GM12878 (cell line): ENCODE measurements at regions of chr6 and their contacts with region 1.

Region 1: DNA sequence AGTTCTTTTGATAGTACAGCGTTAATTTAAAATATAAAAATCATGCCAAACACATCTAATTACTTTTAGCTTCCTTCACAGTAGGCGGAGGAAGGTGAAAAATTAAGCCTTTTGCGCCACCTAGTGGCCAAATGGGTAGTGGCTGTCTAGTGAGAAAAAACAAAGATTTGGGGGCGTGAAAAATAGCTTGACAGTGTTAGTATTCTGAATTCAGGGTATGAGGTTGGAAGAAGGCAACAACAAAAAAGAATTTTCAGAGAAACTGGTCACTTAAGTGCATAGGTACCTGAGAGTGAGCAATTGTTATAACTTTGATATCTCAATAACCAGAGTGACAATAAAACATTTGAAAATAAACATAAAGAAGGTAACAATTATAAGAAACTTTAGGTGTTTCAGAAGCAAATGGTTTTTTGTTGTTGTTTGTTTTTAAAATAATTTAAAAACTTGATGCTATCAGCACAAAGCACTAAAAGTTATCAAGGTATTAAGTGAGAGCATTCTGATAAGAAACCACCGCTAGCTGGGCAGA is 14.3 kb downstream of the PSMB9 start:
- DNase-seq: no peak
- ATAC-seq: peak; percentile 88
- H3K4me3 ChIP-seq: no peak overlapping the region
- H3K27ac ChIP-seq: no peak overlapping the region
- H3K4me1 ChIP-seq: peaks cover 23% of the 10 kb centered on the region
- H3K27me3 ChIP-seq: no peaks in the 10 kb centered on the region
- CTCF ChIP-seq: peak; percentile 67 to 85 (median 85)
- EP300 ChIP-seq: no peak
- POLR2A ChIP-seq: no peak
- RAD21 ChIP-seq: peak; percentile 84

Region 2: DNA sequence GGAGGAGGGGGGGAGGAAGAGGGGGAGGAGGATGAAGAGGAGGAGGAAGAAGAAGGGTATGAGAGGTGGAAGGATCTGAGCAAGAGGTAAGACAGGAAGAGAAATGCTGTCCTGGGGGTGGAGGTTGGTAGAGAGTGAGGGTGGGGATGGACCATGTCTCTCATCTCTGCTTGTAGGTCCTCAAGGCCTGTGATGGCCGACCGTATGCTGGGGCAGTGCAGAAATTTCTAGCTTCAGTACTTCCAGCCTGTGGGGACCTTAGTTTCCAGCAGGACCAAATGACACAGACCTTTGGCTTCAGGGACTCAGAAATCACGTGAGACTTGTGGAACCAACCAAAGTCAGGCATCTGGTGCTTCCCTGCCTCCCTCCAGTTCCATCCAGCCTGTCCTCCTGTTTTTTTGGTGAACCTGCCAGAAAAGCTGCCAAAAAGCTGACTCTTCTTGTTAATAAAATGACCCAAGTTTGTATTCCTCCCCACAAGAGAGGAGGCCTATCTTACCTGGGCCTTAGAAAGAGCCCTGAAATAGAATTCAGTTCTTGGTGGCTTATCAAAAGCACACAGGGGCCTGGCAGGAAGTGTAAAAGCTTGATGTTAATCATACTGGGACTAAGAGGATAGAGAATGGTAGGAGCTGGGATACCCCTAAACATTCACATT is 889.0 kb before region 1 on chr6:
- CTCF ChIA-PET with region 1: no interaction called
- POLR2A ChIA-PET with region 1: no interaction called
- RAD21 ChIA-PET with region 1: no interaction called
- SMC1A ChIA-PET with region 1: no interaction called
- in situ Hi-C with region 1: no loop called
- intact Hi-C with region 1: no loop called
- DNase-seq: no peak
- ATAC-seq: no peak
- H3K4me3 ChIP-seq: no peak overlapping the region
- H3K27ac ChIP-seq: no peak overlapping the region
- H3K4me1 ChIP-seq: no peaks in the 10 kb centered on the region
- H3K27me3 ChIP-seq: no peaks in the 10 kb centered on the region
- CTCF ChIP-seq: no peak
- EP300 ChIP-seq: no peak
- POLR2A ChIP-seq: no peak
- RAD21 ChIP-seq: no peak

Region 3: GRCh38 chr6:32413427-32414047 is 454.8 kb before region 1 on chr6:
- CTCF ChIA-PET with region 1: interaction called, 32 read pairs
- POLR2A ChIA-PET with region 1: interaction called, 3 read pairs
- RAD21 ChIA-PET with region 1: interaction called, 7 read pairs
- SMC1A ChIA-PET with region 1: interaction called, 34 read pairs
- in situ Hi-C with region 1: loop called (anchors 5 kb)
- intact Hi-C with region 1: loop called (anchors 5 kb)
- DNase-seq: peak; percentile 40
- ATAC-seq: peak; percentile 94
- H3K4me3 ChIP-seq: no peak overlapping the region
- H3K27ac ChIP-seq: no peak overlapping the region
- H3K4me1 ChIP-seq: no peaks in the 10 kb centered on the region
- H3K27me3 ChIP-seq: no peaks in the 10 kb centered on the region; a peak in 2 of 4 replicates
- CTCF ChIP-seq: peak; percentile 84 to 96 (median 94)
- EP300 ChIP-seq: no peak
- POLR2A ChIP-seq: no peak
- RAD21 ChIP-seq: peak; percentile 83

Region 4: DNA sequence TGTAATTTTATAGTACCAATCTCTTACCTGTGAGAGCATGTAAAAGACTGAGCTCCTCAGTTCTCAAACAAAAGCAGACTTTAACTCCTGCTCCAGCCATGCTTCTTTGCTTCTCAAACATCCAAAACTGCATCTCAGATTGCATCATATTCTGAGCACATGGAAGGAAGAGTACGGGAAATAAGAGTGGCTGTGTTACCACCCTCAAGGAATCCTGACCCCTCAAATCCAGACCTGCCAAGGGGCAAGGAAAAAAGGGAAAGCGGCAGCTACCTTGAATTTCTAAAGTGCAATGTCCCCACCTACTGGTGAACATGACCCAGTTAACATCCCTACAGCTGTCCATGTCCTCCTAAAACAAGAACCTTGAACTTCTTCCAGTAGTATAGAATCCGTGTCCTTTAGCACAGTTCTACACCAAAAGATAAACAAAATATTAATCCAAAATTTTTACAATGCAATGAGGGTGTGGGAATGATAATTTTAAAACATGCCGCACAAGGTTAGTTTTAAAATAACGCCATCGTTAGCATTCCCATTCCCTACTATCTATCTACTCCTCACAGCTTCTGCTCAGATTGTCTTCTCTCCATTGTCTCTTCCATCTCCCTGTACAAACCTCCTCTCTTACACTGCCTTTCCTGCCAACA is 167.8 kb before region 1 on chr6:
- CTCF ChIA-PET with region 1: interaction called, 58 read pairs
- POLR2A ChIA-PET with region 1: no interaction called
- RAD21 ChIA-PET with region 1: interaction called, 29 read pairs
- SMC1A ChIA-PET with region 1: interaction called, 30 read pairs
- in situ Hi-C with region 1: no loop called
- intact Hi-C with region 1: loop called (anchors 5 kb)
- DNase-seq: no peak
- ATAC-seq: peak; percentile 93
- H3K4me3 ChIP-seq: no peak overlapping the region
- H3K27ac ChIP-seq: no peak overlapping the region
- H3K4me1 ChIP-seq: no peaks in the 10 kb centered on the region
- H3K27me3 ChIP-seq: peaks cover 0 to 3% of the 10 kb centered on the region in 2 experiments; a peak in 2 of 4 replicates
- CTCF ChIP-seq: peak; percentile 65
- EP300 ChIP-seq: no peak
- POLR2A ChIP-seq: no peak
- RAD21 ChIP-seq: peak; percentile 76

Region 5: DNA sequence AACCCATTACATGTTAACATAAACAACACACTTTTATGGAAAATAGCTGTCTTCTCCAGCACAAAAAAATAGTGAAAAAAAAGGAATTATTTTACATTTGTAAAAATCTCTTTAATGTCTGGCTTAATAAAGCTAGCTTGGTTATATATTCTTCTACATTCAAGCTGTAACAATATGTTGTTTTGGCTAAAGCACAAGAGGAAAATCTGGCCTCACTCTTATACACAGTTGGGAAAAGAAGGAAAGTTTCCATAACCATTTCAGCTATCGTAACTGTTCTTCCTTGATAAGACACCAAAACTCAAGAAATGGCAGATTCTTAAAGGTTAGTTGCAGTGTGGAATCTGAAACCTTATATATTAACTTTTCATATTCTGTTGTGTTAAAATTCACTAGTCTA is 59.2 kb before region 1 on chr6:
- CTCF ChIA-PET with region 1: interaction called, 13 read pairs
- POLR2A ChIA-PET with region 1: no interaction called
- RAD21 ChIA-PET with region 1: interaction called, 6 read pairs
- SMC1A ChIA-PET with region 1: interaction called, 7 read pairs
- in situ Hi-C with region 1: no loop called
- intact Hi-C with region 1: no loop called
- DNase-seq: no peak
- ATAC-seq: no peak
- H3K4me3 ChIP-seq: no peak overlapping the region
- H3K27ac ChIP-seq: no peak overlapping the region
- H3K4me1 ChIP-seq: peaks cover 3% of the 10 kb centered on the region; the same call in 1 of the 2 replicates
- H3K27me3 ChIP-seq: no peaks in the 10 kb centered on the region
- CTCF ChIP-seq: no peak
- EP300 ChIP-seq: no peak
- POLR2A ChIP-seq: no peak
- RAD21 ChIP-seq: no peak

Region 6: DNA sequence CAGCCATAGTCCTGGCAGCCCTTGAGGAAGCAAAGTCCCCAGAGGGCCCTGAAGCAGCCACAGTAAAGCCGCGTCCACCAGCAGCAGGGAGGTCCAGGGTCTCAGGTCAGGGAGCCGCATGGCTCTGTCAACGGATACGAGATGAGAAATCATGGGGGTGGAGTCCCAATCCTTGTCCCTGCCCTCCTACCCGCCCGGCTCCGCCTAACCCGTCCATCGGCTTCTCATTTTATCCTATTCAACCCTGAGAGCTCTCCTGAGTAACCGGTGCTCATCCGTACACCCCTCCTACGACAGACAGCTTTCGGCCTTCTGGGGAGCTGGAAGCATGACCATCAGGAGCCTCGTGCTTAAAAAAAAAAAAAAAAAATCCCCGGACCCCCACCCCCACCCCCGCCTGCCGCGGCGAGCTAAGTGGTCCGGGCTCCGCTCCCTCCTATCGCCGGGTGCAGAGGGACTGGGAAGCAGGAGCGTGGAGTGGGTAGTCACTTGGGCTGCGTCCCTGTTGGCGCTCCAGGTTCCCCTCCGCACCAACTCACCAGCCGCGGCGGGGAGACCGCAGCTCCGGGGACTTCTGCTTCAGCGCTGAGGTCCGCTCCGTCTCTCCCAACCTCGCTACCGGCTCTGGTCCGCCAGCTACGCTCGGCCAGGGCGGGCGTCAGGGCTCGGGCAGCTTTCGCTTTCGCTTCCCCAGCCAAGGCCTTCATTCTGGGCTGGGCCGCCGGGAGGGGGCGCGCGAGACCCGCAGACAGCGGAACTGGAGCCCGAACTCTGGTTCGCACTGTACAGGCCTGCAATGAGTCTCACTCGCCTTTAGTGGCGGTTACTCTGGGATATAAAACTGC is 30.0 kb before region 1 on chr6 and contains the start of gene TAP2:
- CTCF ChIA-PET with region 1: interaction called, 311 read pairs
- POLR2A ChIA-PET with region 1: interaction called, 56 read pairs
- RAD21 ChIA-PET with region 1: interaction called, 236 read pairs
- SMC1A ChIA-PET with region 1: interaction called, 226 read pairs
- in situ Hi-C with region 1: no loop called
- intact Hi-C with region 1: loop called (anchors 1 kb)
- DNase-seq: no peak
- ATAC-seq: peak; percentile 85
- H3K4me3 ChIP-seq: peak within 1 kb of the TSS; percentile 95
- H3K27ac ChIP-seq: peak within 1 kb of the TSS; percentile 75
- H3K4me1 ChIP-seq: peaks cover 60% of the 10 kb centered on the region
- H3K27me3 ChIP-seq: no peaks in the 10 kb centered on the region
- CTCF ChIP-seq: peak; percentile 89 to 97 (median 96); a peak in 5 of 6 replicates
- EP300 ChIP-seq: no peak
- POLR2A ChIP-seq: peak; percentile 86
- RAD21 ChIP-seq: peak; percentile 98
- polyA plus RNA-seq, gene TAP2: 5.3 to 6.7 TPM

Region 7: GRCh38 chr6:32879691-32880090 is 11.4 kb after region 1 on chr6:
- CTCF ChIA-PET with region 1: interaction called, 42 read pairs
- POLR2A ChIA-PET with region 1: interaction called, 3 read pairs
- RAD21 ChIA-PET with region 1: interaction called, 5 read pairs
- SMC1A ChIA-PET with region 1: interaction called, 20 read pairs
- in situ Hi-C with region 1: no loop called
- intact Hi-C with region 1: no loop called
- DNase-seq: no peak
- ATAC-seq: no peak
- H3K4me3 ChIP-seq: no peak overlapping the region
- H3K27ac ChIP-seq: no peak overlapping the region
- H3K4me1 ChIP-seq: 0 out of 2 replicates have a peak, but pooled peaks cover 3% of the 10 kb centered on the region
- H3K27me3 ChIP-seq: no peaks in the 10 kb centered on the region; a peak in 1 of 4 replicates
- CTCF ChIP-seq: no peak
- EP300 ChIP-seq: no peak
- POLR2A ChIP-seq: no peak
- RAD21 ChIP-seq: no peak

Region 8: DNA sequence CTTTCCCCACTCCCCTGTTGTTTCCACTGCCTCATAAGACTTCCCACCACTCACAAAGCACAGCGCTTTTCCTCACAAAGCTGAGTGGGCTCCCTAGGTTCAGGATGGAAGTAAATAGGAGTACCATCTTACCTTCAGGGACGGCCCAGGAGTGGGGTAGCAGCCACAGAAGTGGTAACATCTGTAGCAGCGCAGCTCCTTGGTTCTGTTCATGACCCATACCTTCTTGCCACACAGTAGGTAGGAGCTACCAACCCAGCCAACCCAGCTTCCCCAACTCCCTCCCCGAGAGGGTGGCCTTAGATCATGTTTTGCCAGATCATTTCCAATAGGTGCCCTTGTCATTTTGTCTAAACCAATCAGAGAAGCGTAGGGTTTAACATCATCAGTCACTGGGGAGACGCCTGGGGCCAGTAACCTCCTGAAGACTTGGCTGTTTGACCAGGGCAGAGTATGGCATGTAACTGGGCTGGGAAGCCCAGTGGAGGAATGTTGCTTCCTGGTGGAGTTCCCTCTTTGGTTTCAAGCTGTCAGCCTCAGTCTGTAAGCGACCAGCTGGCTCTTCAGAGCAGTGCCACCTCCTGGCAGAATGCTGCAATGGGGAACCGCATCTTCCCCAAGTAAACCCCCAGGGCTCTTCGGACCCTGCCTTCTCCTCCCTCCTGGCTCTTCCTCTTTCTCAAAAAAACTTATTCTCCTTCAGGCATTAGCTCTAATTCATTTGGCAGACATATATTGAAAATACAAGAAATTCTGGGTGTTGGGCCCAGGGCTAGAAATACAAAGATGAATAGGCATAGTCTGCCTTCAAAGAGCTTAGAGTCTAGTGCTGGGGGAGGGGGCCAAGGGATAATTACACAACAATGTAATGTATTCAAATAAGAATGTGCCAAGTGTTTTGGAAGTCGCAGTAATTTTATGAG is 84.8 kb after region 1 on chr6 and contains the start of gene HLA-DMA:
- CTCF ChIA-PET with region 1: interaction called, 9 read pairs
- POLR2A ChIA-PET with region 1: no interaction called
- RAD21 ChIA-PET with region 1: interaction called, 7 read pairs
- SMC1A ChIA-PET with region 1: interaction called, 13 read pairs
- in situ Hi-C with region 1: no loop called
- intact Hi-C with region 1: no loop called
- DNase-seq: peak; percentile 99
- ATAC-seq: peak; percentile 94
- H3K4me3 ChIP-seq: peak within 1 kb of the TSS; percentile 98
- H3K27ac ChIP-seq: peak within 1 kb of the TSS; percentile 90
- H3K4me1 ChIP-seq: peaks cover 44% of the 10 kb centered on the region
- H3K27me3 ChIP-seq: no peaks in the 10 kb centered on the region
- CTCF ChIP-seq: peak; percentile 71 to 77 (median 74)
- EP300 ChIP-seq: peak; percentile 32 to 67; a peak in 3 of 4 replicates
- POLR2A ChIP-seq: peak; percentile 98
- RAD21 ChIP-seq: peak; percentile 46
- polyA plus RNA-seq, gene HLA-DMA: 389 to 552 TPM